WTC11 (cell line): ENCODE measurements at regions of chr1 and their contacts with region 1.

Region 1: DNA sequence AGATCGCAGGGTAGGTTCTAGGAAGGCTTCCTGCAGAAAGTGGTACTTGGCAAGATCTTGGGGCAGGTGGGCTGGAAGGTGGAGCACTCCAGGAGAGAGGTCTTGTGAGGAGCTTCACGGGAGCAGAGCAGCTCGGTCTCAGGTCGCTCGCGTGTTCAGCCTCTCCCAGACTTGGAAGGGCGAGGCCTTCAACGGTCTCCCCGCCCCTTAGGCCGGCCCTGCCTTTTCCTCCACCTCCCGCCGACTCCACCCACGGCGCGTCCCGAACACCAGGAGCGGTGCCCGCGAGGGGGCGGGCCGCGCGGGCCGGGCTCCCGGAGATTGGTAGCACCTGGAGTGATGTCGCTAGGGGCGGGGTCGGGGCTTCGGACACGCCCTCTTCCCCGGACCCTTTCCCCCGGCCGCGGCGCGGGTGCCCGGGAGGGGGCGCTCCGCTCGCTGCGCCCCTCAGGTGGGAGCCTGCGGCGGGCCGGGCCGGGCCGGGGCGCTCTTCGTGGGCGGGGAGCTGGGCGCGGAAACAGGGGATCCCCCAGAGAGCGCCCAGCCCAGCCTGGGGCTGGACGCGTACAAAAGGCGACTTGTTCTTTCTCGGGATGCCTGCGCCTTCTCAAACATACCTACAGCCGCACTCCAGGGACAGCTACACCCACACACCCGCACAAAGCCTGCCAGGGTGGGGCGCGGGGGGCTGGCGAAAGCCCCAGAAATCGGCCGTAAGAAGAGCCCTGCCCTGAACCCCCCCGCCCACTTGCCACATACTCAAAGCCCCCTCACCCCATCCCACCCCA is 35.5 kb downstream of the AHDC1 start:
- DNase-seq: peak; percentile 93
- ATAC-seq: peak; percentile 59
- H3K4me3 Mint-ChIP-seq: peak overlapping the region; percentile 58
- H3K27ac Mint-ChIP-seq: peak overlapping the region; percentile 39; the same call in 1 of the 2 replicates
- H3K4me1 Mint-ChIP-seq: peaks cover 88% of the 10 kb centered on the region
- H3K27me3 Mint-ChIP-seq: no peaks in the 10 kb centered on the region
- CTCF ChIP-seq: peak; percentile 70

Region 2: DNA sequence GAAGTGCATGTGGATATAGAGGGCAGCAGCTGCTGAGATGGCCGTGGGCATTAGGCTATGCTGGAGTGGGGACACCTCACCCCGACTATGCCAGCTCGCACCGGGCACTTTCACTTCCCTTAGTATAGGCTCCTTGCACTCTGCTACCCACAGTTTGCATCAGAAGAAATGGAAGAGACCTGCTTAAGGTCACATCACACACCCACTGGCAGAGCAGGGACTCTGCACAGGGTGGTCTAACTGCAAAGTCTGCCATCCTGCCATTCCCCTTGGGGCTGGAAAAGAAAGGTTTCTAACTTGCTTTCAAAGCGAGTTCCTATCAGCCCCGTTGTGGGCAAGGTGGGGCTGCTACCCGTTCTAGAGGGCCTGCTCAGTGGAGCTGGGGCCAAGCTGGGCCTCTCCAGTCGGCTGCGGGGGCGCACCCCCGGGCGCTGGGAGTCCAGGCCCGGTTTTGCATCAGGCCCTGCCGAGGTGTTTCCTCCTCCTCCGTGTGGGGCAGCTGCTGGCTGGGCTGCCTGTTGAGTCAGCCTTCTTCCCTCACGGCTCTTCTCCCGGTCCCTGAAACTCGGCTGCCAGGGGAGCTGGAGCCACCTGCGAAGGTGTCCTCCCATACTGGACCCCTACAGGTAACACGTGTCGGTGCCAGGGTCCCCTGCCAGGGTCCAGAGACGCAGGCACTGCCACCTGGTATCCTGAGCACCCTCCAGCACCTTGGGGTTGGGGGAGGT is 226.8 kb before region 1 on chr1 and contains the start of gene SYTL1:
- CTCF ChIA-PET with region 1: no interaction called
- POLR2A ChIA-PET with region 1: no interaction called
- DNase-seq: peak; percentile 72
- ATAC-seq: peak; percentile 80
- H3K4me3 Mint-ChIP-seq: peak within 1 kb of the TSS; percentile 67
- H3K27ac Mint-ChIP-seq: peak within 1 kb of the TSS; percentile 38
- H3K4me1 Mint-ChIP-seq: peaks cover 39% of the 10 kb centered on the region
- H3K27me3 Mint-ChIP-seq: peaks cover 2% of the 10 kb centered on the region; the same call in 1 of the 2 replicates
- CTCF ChIP-seq: no peak
- total RNA-seq, gene SYTL1: 18.0 to 19.7 TPM (median 18.5 TPM) in 3 replicates

Region 3: DNA sequence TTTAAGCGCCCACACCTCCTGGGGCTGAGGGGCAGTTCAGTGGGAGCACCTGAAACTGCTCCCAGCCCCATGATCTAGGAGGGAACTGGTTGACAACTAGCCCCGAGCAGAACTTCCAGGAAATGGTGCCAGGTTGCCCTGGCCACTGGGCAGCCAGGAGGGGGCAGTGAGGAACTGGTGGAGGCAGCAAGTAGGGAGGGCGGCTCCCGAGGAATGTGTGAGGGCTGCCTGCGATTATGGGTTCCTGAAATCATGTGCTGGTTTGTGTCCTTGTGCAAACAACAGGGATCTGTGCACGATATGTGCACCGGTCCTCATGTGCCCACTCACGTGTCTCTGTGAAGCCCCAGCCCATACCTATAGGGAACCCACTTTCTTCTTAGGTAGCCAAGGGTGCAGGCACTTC is 166.1 kb before region 1 on chr1:
- CTCF ChIA-PET with region 1: interaction called, 29 read pairs
- POLR2A ChIA-PET with region 1: no interaction called
- DNase-seq: peak; percentile 69
- ATAC-seq: peak; percentile 18
- H3K4me3 Mint-ChIP-seq: no peak overlapping the region
- H3K27ac Mint-ChIP-seq: peak overlapping the region; percentile 91
- H3K4me1 Mint-ChIP-seq: peaks cover 78% of the 10 kb centered on the region
- H3K27me3 Mint-ChIP-seq: no peaks in the 10 kb centered on the region
- CTCF ChIP-seq: no peak

Region 4: GRCh38 chr1:27430903-27431600 is 137.4 kb before region 1 on chr1:
- CTCF ChIA-PET with region 1: interaction called, 12 read pairs
- POLR2A ChIA-PET with region 1: interaction called, 6 read pairs
- DNase-seq: no peak
- ATAC-seq: no peak
- H3K4me3 Mint-ChIP-seq: no peak overlapping the region
- H3K27ac Mint-ChIP-seq: peak overlapping the region; percentile 91
- H3K4me1 Mint-ChIP-seq: peaks cover 75% of the 10 kb centered on the region
- H3K27me3 Mint-ChIP-seq: no peaks in the 10 kb centered on the region
- CTCF ChIP-seq: no peak

Region 5: DNA sequence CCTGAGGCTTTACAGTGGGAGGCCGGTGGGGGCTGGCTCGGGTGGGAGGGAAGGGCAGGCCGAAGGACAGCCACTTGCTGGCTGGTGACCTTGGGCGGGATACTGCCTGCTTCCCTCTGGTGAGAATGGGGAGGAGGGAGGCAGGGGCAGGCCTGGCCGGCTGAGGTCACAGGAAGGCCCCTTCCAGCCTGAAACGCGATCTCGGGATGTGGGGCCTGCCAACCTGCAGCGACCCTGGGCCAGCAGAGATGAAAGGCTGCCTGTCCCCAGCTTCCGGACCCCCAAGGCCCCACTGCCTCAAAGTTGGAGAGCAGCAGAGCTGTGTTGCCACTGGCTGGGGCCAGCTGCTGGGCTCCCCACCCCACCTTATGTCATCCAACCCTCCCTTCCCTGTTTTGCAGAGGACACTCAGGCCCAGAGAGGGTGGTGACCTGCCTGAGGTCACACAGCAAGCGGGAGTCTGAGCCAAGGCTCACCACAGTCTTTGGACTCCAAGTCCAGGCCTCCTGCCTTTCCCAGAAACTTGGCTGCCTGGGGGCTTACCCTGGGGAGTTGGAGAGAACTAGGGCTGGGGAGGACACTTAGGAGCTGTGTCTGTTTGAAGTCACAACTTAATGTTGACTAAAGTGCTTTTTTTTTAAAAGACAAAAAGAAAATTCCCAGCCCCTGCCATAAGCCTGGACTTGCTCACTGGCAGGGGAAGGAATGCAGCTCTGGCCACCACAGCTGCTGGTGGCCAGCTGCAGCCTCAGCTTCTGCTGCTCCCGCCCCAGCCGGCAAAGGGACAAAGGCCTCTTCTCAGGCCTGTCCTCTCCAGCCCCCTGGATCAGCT is 63.7 kb before region 1 on chr1:
- CTCF ChIA-PET with region 1: interaction called, 11 read pairs
- POLR2A ChIA-PET with region 1: no interaction called
- DNase-seq: peak; percentile 58
- ATAC-seq: peak; percentile 83
- H3K4me3 Mint-ChIP-seq: no peak overlapping the region
- H3K27ac Mint-ChIP-seq: no peak overlapping the region
- H3K4me1 Mint-ChIP-seq: peaks cover 33% of the 10 kb centered on the region
- H3K27me3 Mint-ChIP-seq: no peaks in the 10 kb centered on the region
- CTCF ChIP-seq: no peak

Region 6: GRCh38 chr1:27536767-27537166 is 31.7 kb before region 1 on chr1:
- CTCF ChIA-PET with region 1: interaction called, 47 read pairs
- POLR2A ChIA-PET with region 1: interaction called, 3 read pairs
- DNase-seq: peak; percentile 59
- ATAC-seq: peak; percentile 70
- H3K4me3 Mint-ChIP-seq: no peak overlapping the region
- H3K27ac Mint-ChIP-seq: peak overlapping the region; percentile 49; the same call in 1 of the 2 replicates
- H3K4me1 Mint-ChIP-seq: peaks cover 61% of the 10 kb centered on the region
- H3K27me3 Mint-ChIP-seq: no peaks in the 10 kb centered on the region
- CTCF ChIP-seq: no peak

Region 7: DNA sequence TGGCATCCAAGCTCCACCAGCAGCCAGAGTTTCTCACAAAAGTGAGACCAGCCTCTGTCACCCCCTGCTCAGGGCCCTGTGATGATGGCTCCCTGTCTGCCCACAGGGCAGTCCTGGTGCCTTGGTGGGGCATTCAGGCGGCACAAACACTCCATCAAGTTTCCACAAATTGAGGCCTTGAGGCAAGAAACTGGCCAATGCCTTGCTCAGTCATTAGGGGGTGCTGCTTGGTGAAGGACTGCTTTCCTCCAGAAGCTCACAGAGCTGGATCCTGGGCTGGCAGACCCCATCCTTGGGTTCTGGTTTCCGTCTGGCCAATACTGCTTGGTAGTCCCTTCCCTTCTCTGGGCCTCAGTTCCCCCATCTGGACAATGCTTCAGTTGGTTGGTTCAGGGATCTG is 47.9 kb after region 1 on chr1:
- CTCF ChIA-PET with region 1: interaction called, 12 read pairs
- POLR2A ChIA-PET with region 1: no interaction called
- DNase-seq: no peak
- ATAC-seq: peak; percentile 6; the same call in 1 of the 2 replicates
- H3K4me3 Mint-ChIP-seq: peak overlapping the region; percentile 48
- H3K27ac Mint-ChIP-seq: no peak overlapping the region
- H3K4me1 Mint-ChIP-seq: peaks cover 15% of the 10 kb centered on the region
- H3K27me3 Mint-ChIP-seq: peaks cover 15% of the 10 kb centered on the region
- CTCF ChIP-seq: no peak

Region 8: GRCh38 chr1:27671964-27672749 is 103.7 kb after region 1 on chr1 and contains the start of gene IFI6:
- CTCF ChIA-PET with region 1: interaction called, 21 read pairs
- POLR2A ChIA-PET with region 1: interaction called, 3 read pairs
- DNase-seq: peak; percentile 60
- ATAC-seq: peak; percentile 84
- H3K4me3 Mint-ChIP-seq: peak within 1 kb of the TSS; percentile 75
- H3K27ac Mint-ChIP-seq: peak within 1 kb of the TSS; percentile 94
- H3K4me1 Mint-ChIP-seq: peaks cover 12% of the 10 kb centered on the region
- H3K27me3 Mint-ChIP-seq: peaks cover 19% of the 10 kb centered on the region
- CTCF ChIP-seq: no peak
- total RNA-seq, gene IFI6: 4.5 to 9.4 TPM (median 6.4 TPM) in 3 replicates